Activated T-helper 1 cell treated with anti-CD3 and anti-CD28 coated beads, Interleukin-12 subunit alpha, Interleukin-12 subunit beta, Interleukin-2, Interleukin-4 antibody, amounts not matched to agents 30 ng/mL and 10 ng/mL and 1 ng/mL, durations not matched to agents 14 hours and 24 hours and 36 hours (primary cell): ENCODE measurements at regions of chr3 and their contacts with region 1.

Region 1: GRCh38 chr3:72134989-72135451 is 350.1 kb upstream of the PROK2 start:
- DNase-seq: no peak
- H3K4me3 Mint-ChIP-seq: peak overlapping the region; percentile 60
- H3K27ac Mint-ChIP-seq: peak overlapping the region; percentile 89
- H3K4me1 Mint-ChIP-seq: peaks cover 48% of the 10 kb centered on the region
- H3K27me3 Mint-ChIP-seq: peaks cover 2% of the 10 kb centered on the region

Region 2: DNA sequence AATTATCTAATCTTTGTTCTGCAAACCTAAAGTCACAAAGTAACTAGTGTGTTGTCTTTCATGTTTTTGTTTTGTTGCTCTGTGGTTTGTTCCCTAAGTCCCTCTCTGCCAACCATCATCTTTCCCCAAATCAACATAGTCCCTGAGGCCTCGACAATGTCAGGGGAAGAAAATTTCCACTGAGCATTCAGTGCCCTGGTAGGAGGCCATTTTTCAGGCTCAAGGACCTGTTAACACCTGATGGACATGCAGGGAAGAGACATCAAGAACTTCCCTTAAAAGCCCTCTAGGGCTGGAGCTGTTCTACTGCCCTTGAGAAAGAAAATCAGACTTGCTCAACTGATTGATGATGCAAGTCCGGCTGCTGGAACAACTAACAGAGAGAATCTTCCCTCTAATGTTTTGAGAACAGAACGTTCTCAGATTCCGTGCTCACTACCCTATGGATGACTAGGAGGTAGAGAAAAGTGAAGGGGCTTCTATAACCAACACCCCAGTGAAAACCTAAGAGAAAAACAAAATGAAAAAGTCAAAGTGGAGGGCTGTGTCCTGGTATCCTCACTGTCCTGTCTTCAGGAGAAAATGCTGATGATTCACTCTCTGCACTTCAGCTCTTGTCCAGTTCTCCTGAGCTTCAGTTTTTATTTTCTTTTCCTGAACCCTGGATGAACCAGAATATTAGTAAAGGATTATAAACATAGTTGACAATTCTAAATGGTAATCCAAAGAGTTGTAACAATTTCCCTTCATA is 924.6 kb before region 1 on chr3:
- intact Hi-C with region 1: no loop called
- DNase-seq: no peak
- H3K4me3 Mint-ChIP-seq: no peak overlapping the region
- H3K27ac Mint-ChIP-seq: no peak overlapping the region
- H3K4me1 Mint-ChIP-seq: peaks cover 5% of the 10 kb centered on the region
- H3K27me3 Mint-ChIP-seq: peaks cover 13% of the 10 kb centered on the region

Region 3: GRCh38 chr3:71955240-71956068 is 179.6 kb before region 1 on chr3:
- intact Hi-C with region 1: loop called (anchors 5 kb)
- DNase-seq: no peak
- H3K4me3 Mint-ChIP-seq: no peak overlapping the region
- H3K27ac Mint-ChIP-seq: no peak overlapping the region
- H3K4me1 Mint-ChIP-seq: peaks cover 33% of the 10 kb centered on the region
- H3K27me3 Mint-ChIP-seq: no peaks in the 10 kb centered on the region

Region 4: DNA sequence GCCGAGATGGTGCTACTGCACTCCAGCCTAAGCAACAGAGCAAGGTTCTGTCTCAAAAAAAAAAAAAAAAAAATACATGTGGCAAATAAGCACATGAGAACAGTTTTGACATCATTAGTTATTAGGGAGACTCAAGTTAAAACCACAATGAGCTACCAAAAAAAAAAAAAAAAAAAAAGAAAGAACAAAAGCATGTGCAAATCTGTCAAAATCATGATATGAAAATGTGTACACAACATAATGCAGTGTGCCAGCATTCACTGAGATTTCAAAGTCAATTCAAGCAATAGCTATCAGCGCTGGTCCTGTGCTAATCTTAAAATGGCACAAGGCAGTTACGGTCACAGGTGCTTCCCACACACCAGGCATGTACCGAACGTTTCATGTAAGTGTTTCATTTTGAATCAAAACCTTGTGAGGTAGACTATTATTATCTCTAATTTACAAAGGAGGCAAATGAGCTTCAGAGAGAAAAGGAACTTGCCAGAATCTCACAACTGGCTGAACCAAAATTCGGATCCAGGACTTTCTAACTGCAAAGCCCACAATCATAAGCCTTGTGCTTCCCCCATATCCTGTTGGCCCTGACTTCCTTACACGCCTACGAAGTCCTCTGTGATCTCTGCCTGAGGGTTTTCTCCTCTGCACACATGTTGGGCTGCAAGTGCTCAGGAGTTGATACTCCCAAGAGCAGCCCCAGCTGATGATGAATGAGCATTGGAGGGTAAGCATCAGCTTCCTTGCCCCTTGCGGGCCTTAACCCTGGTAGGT is 150.0 kb before region 1 on chr3:
- intact Hi-C with region 1: loop called (anchors 1 kb)
- DNase-seq: peak; percentile 21
- H3K4me3 Mint-ChIP-seq: peak overlapping the region; percentile 62
- H3K27ac Mint-ChIP-seq: peak overlapping the region; percentile 91
- H3K4me1 Mint-ChIP-seq: peaks cover 62% of the 10 kb centered on the region
- H3K27me3 Mint-ChIP-seq: no peaks in the 10 kb centered on the region

Region 5: DNA sequence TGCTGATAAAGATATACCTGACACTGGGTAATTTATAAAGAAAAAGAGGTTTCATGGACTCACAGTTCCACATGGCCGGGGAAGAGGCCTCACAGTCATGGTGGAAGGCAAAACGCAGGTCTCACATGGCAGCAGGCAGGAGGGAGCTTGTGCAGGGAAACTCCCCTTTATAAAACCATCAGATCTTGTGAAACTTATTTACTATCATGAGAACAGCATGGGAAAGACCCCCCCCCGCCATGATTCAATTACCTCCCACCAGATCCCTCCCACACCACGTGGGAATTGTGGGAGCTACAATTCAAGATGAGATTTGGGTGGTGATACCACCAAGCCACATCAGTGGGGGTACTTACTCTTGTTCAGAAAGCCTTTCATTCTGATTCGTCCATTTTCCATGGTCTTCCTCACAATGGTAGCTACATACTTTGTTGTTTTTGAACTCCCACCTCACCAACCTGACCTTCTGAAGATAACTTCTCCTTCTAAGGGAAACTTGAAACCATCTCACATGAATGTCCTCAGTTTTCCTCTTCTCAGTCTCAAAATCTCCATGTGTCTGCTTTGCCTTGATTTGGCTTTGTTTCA is 74.5 kb before region 1 on chr3:
- intact Hi-C with region 1: loop called (anchors 1 kb)
- DNase-seq: no peak
- H3K4me3 Mint-ChIP-seq: no peak overlapping the region
- H3K27ac Mint-ChIP-seq: peak overlapping the region; percentile 47
- H3K4me1 Mint-ChIP-seq: peaks cover 17% of the 10 kb centered on the region
- H3K27me3 Mint-ChIP-seq: no peaks in the 10 kb centered on the region

Region 6: GRCh38 chr3:72259755-72260587 is 125.0 kb after region 1 on chr3:
- intact Hi-C with region 1: loop called (anchors 2 kb)
- DNase-seq: no peak
- H3K4me3 Mint-ChIP-seq: no peak overlapping the region
- H3K27ac Mint-ChIP-seq: peak overlapping the region; percentile 81
- H3K4me1 Mint-ChIP-seq: peaks cover 24% of the 10 kb centered on the region
- H3K27me3 Mint-ChIP-seq: peaks cover 3% of the 10 kb centered on the region

Region 7: DNA sequence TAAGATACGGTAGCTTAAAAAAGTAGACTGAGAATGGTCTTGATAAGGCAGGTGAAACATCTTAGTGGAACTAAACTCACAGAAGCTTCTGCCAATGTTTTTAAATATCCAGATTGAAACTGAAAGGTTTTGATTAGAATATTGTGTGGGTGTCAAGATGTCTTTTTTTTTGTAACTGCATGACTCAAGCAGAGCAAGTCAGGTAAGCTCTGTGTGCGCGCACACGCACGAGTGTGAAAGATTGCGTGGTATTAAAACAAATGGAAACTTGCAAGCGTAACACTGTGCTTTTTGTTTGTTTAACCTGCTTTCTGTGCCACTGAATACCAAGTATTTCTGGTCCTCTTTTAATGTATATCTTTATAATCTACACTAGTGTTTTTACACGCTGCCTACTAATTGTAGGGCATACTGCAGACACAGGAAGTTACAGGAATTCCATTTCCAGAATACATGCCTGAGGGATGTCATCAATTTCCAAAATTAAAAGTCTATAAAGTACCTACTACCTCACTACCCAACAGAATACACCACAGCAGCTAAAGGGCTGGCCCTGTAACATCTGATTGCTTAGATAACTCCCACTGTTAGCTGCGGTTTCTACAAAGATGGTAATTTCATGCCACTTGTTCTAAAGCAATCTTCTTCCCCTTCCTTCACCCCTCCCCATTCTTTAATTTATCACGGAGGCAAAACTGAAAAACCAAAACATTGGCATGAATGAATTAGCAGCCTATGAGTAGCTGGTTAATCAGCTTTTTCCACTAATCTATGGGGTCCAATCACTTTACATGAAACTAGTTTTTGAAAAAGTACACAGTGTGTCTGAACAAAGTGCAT is 240.4 kb after region 1 on chr3:
- intact Hi-C with region 1: loop called (anchors 2 kb)
- DNase-seq: no peak
- H3K4me3 Mint-ChIP-seq: peak overlapping the region; percentile 32
- H3K27ac Mint-ChIP-seq: peak overlapping the region; percentile 92
- H3K4me1 Mint-ChIP-seq: peaks cover 48% of the 10 kb centered on the region
- H3K27me3 Mint-ChIP-seq: no peaks in the 10 kb centered on the region